AG04450 (cell line): ENCODE measurements at regions of chr2 and their contacts with region 1.

Region 1: DNA sequence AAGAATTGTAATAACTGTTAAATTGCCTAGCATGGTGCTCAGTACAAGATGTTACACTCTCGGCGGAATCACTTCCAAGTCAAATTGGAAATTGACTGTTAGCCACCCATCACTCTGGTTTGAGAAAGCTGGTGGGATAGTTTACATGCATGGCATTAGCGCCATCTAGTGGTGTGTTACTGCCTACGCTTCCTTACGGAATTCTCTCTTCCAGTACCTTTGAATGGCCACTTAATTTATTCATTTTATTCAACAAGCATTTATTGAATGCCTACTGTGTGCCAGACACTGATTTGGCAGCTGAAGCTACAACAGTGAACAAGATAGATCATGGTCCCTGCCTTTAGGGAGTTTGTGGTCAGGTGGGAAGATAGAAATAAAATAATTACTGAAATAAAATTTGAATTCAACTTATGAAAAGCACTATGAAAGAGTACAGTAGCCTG is 171.2 kb downstream of the TMEM247 start:
- DNase-seq: peak; percentile 77
- H3K4me3 ChIP-seq: no peak overlapping the region
- H3K27ac ChIP-seq: no peak overlapping the region
- H3K27me3 ChIP-seq: no peaks in the 10 kb centered on the region
- CTCF ChIP-seq: peak; percentile 94

Region 2: DNA sequence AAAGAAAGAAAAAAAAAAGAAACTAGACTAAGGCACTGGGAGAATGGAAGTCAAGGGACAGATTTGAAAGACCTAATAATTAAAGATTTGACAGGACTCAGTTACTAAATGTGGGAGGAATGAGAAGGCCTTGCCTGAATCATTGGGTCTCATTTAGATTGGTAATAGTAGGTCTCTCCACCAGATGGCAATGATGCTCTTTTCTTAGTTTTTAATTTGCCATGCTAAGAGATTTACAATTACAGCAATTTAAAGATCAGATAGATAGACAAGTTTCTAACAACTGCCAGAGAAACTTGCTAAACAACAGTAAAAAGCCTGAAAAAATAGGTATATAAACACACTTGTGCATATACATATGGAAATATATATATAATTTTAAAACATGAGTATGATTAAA is 18.2 kb before region 1 on chr2:
- CTCF ChIA-PET with region 1: interaction called, 23 read pairs
- POLR2A ChIA-PET with region 1: interaction called, 5 read pairs
- DNase-seq: no peak
- H3K4me3 ChIP-seq: no peak overlapping the region
- H3K27ac ChIP-seq: no peak overlapping the region
- H3K27me3 ChIP-seq: no peaks in the 10 kb centered on the region
- CTCF ChIP-seq: peak; percentile 69

Region 3: DNA sequence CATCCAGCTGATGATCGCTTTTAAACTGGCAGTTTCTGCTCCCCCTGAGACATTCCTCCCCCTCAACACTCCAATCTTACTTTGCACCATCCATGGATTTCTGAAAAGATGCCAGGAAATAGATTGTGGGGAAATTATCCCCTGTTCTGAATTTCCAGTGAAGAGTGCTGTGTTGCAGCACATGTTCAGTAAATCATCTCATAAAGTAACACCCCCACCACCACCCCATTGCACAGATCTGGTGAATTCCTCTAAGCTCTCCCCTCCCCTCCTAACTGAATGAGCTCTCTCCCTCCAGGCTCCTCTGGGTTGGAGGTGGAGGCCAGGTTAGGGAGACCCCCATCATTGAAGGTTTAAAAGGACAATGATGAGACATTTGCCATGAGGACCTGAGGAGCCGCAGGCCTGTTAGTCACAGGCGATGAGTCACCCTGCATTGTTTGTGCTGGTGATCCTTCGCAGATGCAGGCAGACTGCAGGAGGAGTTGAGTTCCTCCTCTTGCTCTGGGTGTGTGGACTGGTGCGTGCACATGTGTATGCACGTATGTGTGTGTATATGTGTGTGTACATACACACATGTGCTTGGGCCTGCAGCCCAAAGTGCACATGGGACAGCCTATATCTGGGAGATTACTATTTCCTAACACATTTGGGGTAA is 222.9 kb after region 1 on chr2:
- CTCF ChIA-PET with region 1: interaction called, 11 read pairs
- POLR2A ChIA-PET with region 1: no interaction called
- DNase-seq: peak; percentile 81
- H3K4me3 ChIP-seq: no peak overlapping the region
- H3K27ac ChIP-seq: peak overlapping the region; percentile 94
- H3K27me3 ChIP-seq: no peaks in the 10 kb centered on the region
- CTCF ChIP-seq: no peak

Region 4: GRCh38 chr2:46887028-46887885 is 236.7 kb after region 1 on chr2:
- CTCF ChIA-PET with region 1: interaction called, 37 read pairs
- POLR2A ChIA-PET with region 1: interaction called, 4 read pairs
- DNase-seq: no peak
- H3K4me3 ChIP-seq: no peak overlapping the region
- H3K27ac ChIP-seq: no peak overlapping the region
- H3K27me3 ChIP-seq: no peaks in the 10 kb centered on the region
- CTCF ChIP-seq: no peak

Region 5: DNA sequence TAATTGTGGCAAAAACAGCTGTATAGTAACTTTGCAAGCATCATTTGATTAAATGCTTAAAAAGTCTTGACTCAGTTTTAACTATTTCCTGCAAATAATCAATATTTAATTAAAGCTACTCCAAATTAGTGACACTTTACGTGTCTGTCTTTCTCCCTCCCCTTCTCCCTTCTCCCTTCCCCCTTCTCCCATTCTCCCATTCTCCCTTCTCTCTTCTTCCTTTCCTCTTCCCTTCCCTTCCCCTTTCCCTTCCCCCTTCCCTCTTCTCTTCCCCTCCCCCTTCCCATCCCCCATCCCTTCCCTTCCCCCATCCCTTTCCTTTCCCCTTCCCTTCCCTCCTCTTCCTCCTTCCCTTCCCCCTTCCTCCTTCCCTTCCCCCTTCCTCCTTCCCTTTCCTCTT is 829.3 kb after region 1 on chr2:
- CTCF ChIA-PET with region 1: no interaction called
- POLR2A ChIA-PET with region 1: no interaction called
- DNase-seq: no peak
- H3K4me3 ChIP-seq: no peak overlapping the region
- H3K27ac ChIP-seq: no peak overlapping the region
- H3K27me3 ChIP-seq: no peaks in the 10 kb centered on the region
- CTCF ChIP-seq: no peak